Transverse colon (tissue), 4 donors: ENCODE measurements at regions of chr9 and their contacts with region 1.

Region 1: GRCh38 chr9:116860509-116861120 is 173.5 kb downstream of the TRIM32 start:
- DNase-seq: peak; percentile 51
- H3K4me3 ChIP-seq: no peak overlapping the region
- H3K27ac ChIP-seq: no peak overlapping the region
- H3K4me1 ChIP-seq: no peaks in the 10 kb centered on the region
- H3K27me3 ChIP-seq: no peaks in the 10 kb centered on the region
- CTCF ChIP-seq: peak; percentile 49 to 72 (median 60)
- EP300 ChIP-seq: no peak
- POLR2A ChIP-seq: no peak

Region 2: GRCh38 chr9:116737152-116737546 is 123.5 kb before region 1 on chr9:
- in situ Hi-C with region 1: no loop called
- intact Hi-C with region 1: loop called (anchors 10 kb)
- DNase-seq: peak; percentile 70
- H3K4me3 ChIP-seq: no peak overlapping the region
- H3K27ac ChIP-seq: no peak overlapping the region
- H3K4me1 ChIP-seq: peaks cover 0 to 3% (median 0%) of the 10 kb centered on the region in 4 donors
- H3K27me3 ChIP-seq: no peaks in the 10 kb centered on the region
- CTCF ChIP-seq: peak; percentile 65 to 85 (median 80)
- EP300 ChIP-seq: no peak
- POLR2A ChIP-seq: no peak

Region 3: DNA sequence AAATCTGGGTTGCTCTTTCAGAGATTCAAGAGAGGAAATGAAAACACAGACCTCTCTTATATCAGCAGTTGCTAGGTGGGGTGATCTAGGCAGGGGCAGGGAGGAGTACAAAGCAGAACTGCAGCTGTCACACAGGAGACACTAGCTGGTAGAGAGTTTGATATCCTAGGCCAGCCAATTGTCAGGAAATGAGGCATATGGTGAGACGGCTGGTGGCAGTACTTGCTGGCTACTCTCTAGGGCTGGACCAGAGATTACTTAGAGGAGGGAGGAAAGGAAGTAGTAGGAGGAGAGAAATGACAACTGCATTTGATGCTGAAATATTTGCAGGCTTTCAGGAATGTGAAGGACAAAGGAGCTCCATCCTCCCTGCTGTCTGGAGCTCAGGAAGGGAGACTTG is 59.7 kb before region 1 on chr9:
- in situ Hi-C with region 1: no loop called
- intact Hi-C with region 1: no loop called
- DNase-seq: no peak
- H3K4me3 ChIP-seq: no peak overlapping the region
- H3K27ac ChIP-seq: no peak overlapping the region
- H3K4me1 ChIP-seq: no peaks in the 10 kb centered on the region
- H3K27me3 ChIP-seq: no peaks in the 10 kb centered on the region
- CTCF ChIP-seq: no peak
- EP300 ChIP-seq: no peak
- POLR2A ChIP-seq: no peak